A673 (cell line): ENCODE measurements at regions of chr9 and their contacts with region 1.

Region 1: GRCh38 chr9:92342825-92343488 is 17.2 kb downstream of the CENPP start:
- DNase-seq: no peak
- H3K4me3 ChIP-seq: no peak overlapping the region
- H3K27ac ChIP-seq: no peak overlapping the region
- H3K4me1 ChIP-seq: no peaks in the 10 kb centered on the region
- H3K27me3 ChIP-seq: no peaks in the 10 kb centered on the region
- CTCF ChIP-seq: peak; percentile 46; the same call in 1 of the 2 replicates

Region 2: GRCh38 chr9:92438900-92439526 is 96.1 kb after region 1 on chr9:
- CTCF ChIA-PET with region 1: no interaction called
- POLR2A ChIA-PET with region 1: no interaction called
- intact Hi-C with region 1: loop called (anchors 5 kb)
- DNase-seq: peak; percentile 29
- H3K4me3 ChIP-seq: no peak overlapping the region
- H3K27ac ChIP-seq: no peak overlapping the region
- H3K4me1 ChIP-seq: peaks cover under 1% of the 10 kb centered on the region
- H3K27me3 ChIP-seq: no peaks in the 10 kb centered on the region
- CTCF ChIP-seq: peak; percentile 58; the same call in 1 of the 2 replicates

Region 3: DNA sequence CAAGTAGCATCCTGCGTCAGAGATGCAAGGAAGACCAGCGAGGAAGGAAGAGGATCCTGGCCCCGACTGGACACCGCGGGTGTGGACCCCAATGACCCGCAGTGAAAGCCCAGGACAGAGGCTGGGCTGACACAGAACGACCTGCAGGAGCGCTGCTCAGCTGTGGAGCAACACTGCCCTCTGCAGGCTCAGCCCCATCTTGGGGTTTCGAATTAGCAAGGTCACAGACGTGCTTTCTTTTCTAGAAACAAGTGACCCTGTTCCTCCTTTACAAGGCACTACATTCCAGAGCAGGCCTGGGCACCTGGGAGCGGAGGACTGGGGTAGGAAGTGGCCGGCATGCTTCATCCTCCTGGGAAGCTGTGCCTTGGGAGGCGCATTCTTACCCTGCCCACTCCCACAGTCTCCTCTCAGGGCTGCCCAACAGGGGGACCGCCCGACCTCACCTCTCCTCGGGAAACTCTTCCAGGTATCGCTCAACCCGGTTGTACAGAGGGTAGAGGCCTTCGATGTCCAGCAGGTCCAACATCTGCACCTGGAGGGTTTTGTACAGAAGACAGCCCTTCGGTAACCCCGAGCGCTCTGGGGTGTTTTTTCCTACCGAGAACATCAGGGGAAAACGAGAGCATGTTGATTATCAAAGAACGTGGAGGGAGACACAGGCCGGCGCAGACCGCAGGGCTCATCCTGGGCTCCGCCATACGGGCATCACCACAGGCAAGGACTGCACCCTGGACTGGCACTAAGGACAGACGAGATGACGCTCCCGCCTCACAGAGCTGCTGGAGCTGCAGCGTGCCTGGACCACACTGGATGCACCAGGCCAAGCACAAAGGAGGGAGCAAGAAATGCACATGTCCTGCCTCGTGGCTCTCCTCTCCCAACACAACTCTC is 292.0 kb after region 1 on chr9:
- CTCF ChIA-PET with region 1: interaction called, 4 read pairs
- POLR2A ChIA-PET with region 1: no interaction called
- intact Hi-C with region 1: loop called (anchors 5 kb)
- DNase-seq: peak; percentile 66
- H3K4me3 ChIP-seq: no peak overlapping the region
- H3K27ac ChIP-seq: no peak overlapping the region
- H3K4me1 ChIP-seq: no peaks in the 10 kb centered on the region
- H3K27me3 ChIP-seq: no peaks in the 10 kb centered on the region
- CTCF ChIP-seq: peak; percentile 93